PC-9 (cell line): ENCODE measurements at regions of chr17 and their contacts with region 1.

Region 1: DNA sequence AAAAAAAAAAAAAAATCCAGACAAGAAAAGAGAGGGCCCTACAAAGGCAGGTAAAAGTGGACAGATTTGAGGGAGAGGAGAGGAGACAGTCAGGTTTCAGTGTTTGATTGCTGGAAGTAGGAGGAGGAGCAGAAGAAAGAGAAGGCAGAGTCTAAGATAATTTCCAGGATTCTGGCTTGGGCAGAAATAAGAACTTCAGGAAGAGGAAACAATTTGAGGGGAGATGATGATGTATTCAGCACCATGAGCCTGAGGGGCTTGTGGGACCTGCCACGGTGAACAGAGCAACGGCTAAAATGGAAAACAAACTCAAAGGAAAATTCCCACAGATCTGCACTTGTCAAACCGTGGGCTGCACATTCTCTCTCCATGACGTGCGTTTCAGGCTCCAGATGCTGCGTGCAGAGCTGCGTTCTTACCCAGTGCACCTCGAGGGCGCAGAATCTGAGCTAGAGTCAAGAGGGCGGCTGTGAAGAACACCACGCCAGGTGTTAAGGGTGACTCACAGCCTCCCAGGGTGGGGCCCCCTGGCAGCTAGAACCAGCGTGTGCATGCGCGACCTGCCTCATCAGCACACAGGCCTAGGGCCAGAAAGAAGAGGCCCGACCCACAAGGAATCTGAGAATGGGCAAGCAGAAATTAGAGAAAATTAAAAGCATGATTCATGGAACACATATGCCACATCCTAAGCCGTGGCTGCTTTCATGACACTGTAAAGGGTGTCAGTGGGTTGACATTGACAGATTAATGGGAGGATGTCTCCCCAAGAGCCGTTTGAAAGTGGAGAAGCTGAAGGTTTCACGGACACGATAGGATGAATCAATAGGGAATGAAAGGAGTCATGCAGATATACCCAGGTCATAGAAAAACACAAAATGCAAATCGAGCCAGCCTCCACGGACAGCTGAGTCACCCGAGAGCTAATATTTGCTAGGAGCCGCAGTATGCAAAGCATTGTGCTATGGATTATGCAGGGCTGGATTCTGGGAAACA is 29.1 kb downstream of the MARCHF10 start:
- DNase-seq: peak; percentile 89 to 98
- H3K4me3 ChIP-seq: peak overlapping the region; percentile 22; the same call in 1 of the 2 replicates
- H3K27ac ChIP-seq: peak overlapping the region; percentile 98
- H3K4me1 ChIP-seq: peaks cover 55% of the 10 kb centered on the region
- H3K27me3 ChIP-seq: no peaks in the 10 kb centered on the region
- CTCF ChIP-seq: no peak

Region 2: GRCh38 chr17:62761917-62762316 is 17.1 kb before region 1 on chr17:
- CTCF ChIA-PET with region 1: interaction called, 5 read pairs
- POLR2A ChIA-PET with region 1: no interaction called
- intact Hi-C with region 1: loop called (anchors 1 kb)
- DNase-seq: peak; percentile 82 to 96
- H3K4me3 ChIP-seq: no peak overlapping the region
- H3K27ac ChIP-seq: peak overlapping the region; percentile 54
- H3K4me1 ChIP-seq: peaks cover 48% of the 10 kb centered on the region
- H3K27me3 ChIP-seq: no peaks in the 10 kb centered on the region
- CTCF ChIP-seq: no peak

Region 3: GRCh38 chr17:63722403-63722802 is 943.4 kb after region 1 on chr17:
- CTCF ChIA-PET with region 1: no interaction called
- POLR2A ChIA-PET with region 1: interaction called, 11 read pairs
- intact Hi-C with region 1: no loop called
- DNase-seq: no peak
- H3K4me3 ChIP-seq: no peak overlapping the region
- H3K27ac ChIP-seq: no peak overlapping the region
- H3K4me1 ChIP-seq: no peaks in the 10 kb centered on the region
- H3K27me3 ChIP-seq: no peaks in the 10 kb centered on the region
- CTCF ChIP-seq: no peak